ENCODE measurements at regions of chr1 and their contacts with region 1.

Region 1: GRCh38 chr1:220818421-220819173 is 31.9 kb downstream of the MTARC1 start:
- DNase-seq: peak; percentile 98
- ATAC-seq: peak; percentile 91
- H3K4me3 ChIP-seq: no peak overlapping the region
- H3K27ac ChIP-seq: peak overlapping the region; percentile 74; the same call in 1 of the 2 replicates
- H3K4me1 ChIP-seq: peaks cover 12% of the 10 kb centered on the region
- H3K27me3 ChIP-seq: peaks cover 11% of the 10 kb centered on the region
- CTCF ChIP-seq: no peak
- POLR2A ChIP-seq: no peak
- RAD21 ChIP-seq: no peak

Region 2: GRCh38 chr1:221089266-221089665 is 270.7 kb after region 1 on chr1:
- CTCF ChIA-PET with region 1: no interaction called
- POLR2A ChIA-PET with region 1: no interaction called
- dilution Hi-C with region 1: no loop called
- in situ Hi-C with region 1: no loop called
- intact Hi-C with region 1: loop called (anchors 5 kb)
- DNase-seq: peak; percentile 61
- ATAC-seq: peak; percentile 84
- H3K4me3 ChIP-seq: no peak overlapping the region
- H3K27ac ChIP-seq: peak overlapping the region; percentile 80
- H3K4me1 ChIP-seq: peaks cover 12% of the 10 kb centered on the region
- H3K27me3 ChIP-seq: no peaks in the 10 kb centered on the region
- CTCF ChIP-seq: no peak
- POLR2A ChIP-seq: no peak
- RAD21 ChIP-seq: no peak

Measured in IMR-90 (cell line).